Activated CD8-positive, alpha-beta T cell treated with anti-CD3 and anti-CD28 coated beads for 36 hours (primary cell): ENCODE measurements at regions of chr2 and their contacts with region 1.

Region 1: GRCh38 chr2:18520451-18521425 is 39.7 kb downstream of the RDH14 start:
- DNase-seq: peak; percentile 87
- ATAC-seq: peak; percentile 80
- H3K4me3 Mint-ChIP-seq: no peak overlapping the region
- H3K27ac Mint-ChIP-seq: no peak overlapping the region
- H3K4me1 Mint-ChIP-seq: no peaks in the 10 kb centered on the region
- H3K27me3 Mint-ChIP-seq: peaks cover 17% of the 10 kb centered on the region
- CTCF ChIP-seq: peak; percentile 78

Region 2: GRCh38 chr2:18536100-18536499 is 15.4 kb after region 1 on chr2:
- CTCF ChIA-PET with region 1: interaction called, 11 read pairs
- POLR2A ChIA-PET with region 1: no interaction called
- intact Hi-C with region 1: no loop called
- DNase-seq: no peak
- ATAC-seq: no peak
- H3K4me3 Mint-ChIP-seq: no peak overlapping the region
- H3K27ac Mint-ChIP-seq: no peak overlapping the region
- H3K4me1 Mint-ChIP-seq: peaks cover 2% of the 10 kb centered on the region
- H3K27me3 Mint-ChIP-seq: peaks cover 6% of the 10 kb centered on the region
- CTCF ChIP-seq: no peak

Region 3: GRCh38 chr2:18566145-18566769 is 45.5 kb after region 1 on chr2:
- CTCF ChIA-PET with region 1: no interaction called
- POLR2A ChIA-PET with region 1: no interaction called
- intact Hi-C with region 1: no loop called
- DNase-seq: no peak
- ATAC-seq: no peak
- H3K4me3 Mint-ChIP-seq: no peak overlapping the region
- H3K27ac Mint-ChIP-seq: no peak overlapping the region
- H3K4me1 Mint-ChIP-seq: peaks cover under 1% of the 10 kb centered on the region
- H3K27me3 Mint-ChIP-seq: no peaks in the 10 kb centered on the region
- CTCF ChIP-seq: no peak

Region 4: GRCh38 chr2:18749912-18750526 is 229.3 kb after region 1 on chr2:
- CTCF ChIA-PET with region 1: interaction called, 11 read pairs
- POLR2A ChIA-PET with region 1: no interaction called
- intact Hi-C with region 1: loop called (anchors 10 kb)
- DNase-seq: peak; percentile 67
- ATAC-seq: no peak
- H3K4me3 Mint-ChIP-seq: no peak overlapping the region
- H3K27ac Mint-ChIP-seq: no peak overlapping the region
- H3K4me1 Mint-ChIP-seq: no peaks in the 10 kb centered on the region
- H3K27me3 Mint-ChIP-seq: no peaks in the 10 kb centered on the region
- CTCF ChIP-seq: peak; percentile 82

Region 5: DNA sequence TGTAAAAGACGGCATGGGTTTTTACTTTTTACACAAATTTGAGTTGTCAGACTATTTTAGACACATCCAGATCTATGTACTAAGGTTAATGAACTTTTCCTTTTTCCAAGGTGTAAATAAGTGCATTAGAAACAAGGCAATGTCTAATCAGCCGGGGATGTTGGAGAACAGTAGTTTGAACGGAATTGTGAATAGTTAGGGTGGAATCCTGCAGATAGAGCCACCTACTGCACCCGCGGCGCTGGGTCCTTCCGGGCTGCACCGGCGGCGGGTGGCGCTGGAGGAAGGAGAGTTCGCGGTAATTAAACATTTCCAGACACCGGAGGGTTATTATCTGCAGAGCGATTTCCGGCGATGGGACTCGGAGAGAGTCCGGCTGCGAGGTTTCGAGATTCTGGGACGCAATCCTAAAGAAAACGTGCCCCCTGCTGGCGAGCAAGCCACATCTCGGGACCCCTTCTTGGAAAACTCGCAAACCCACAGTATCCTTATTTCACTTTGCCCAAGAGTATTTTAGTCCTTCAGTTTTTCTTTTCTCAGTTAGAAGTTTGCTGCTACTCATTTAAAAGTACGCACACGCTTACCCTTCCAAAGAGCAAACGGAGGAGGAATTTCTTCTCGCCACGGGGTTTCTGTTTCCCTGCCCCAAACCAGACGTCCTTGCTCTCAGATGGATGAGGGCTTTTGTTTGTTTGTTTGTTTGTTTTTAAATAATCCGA is 842.2 kb after region 1 on chr2:
- CTCF ChIA-PET with region 1: interaction called, 10 read pairs
- POLR2A ChIA-PET with region 1: no interaction called
- intact Hi-C with region 1: loop called (anchors 10 kb)
- DNase-seq: peak; percentile 71
- ATAC-seq: peak; percentile 67
- H3K4me3 Mint-ChIP-seq: peak overlapping the region; percentile 86
- H3K27ac Mint-ChIP-seq: no peak overlapping the region
- H3K4me1 Mint-ChIP-seq: peaks cover 24% of the 10 kb centered on the region
- H3K27me3 Mint-ChIP-seq: peaks cover 53% of the 10 kb centered on the region
- CTCF ChIP-seq: no peak

Region 6: DNA sequence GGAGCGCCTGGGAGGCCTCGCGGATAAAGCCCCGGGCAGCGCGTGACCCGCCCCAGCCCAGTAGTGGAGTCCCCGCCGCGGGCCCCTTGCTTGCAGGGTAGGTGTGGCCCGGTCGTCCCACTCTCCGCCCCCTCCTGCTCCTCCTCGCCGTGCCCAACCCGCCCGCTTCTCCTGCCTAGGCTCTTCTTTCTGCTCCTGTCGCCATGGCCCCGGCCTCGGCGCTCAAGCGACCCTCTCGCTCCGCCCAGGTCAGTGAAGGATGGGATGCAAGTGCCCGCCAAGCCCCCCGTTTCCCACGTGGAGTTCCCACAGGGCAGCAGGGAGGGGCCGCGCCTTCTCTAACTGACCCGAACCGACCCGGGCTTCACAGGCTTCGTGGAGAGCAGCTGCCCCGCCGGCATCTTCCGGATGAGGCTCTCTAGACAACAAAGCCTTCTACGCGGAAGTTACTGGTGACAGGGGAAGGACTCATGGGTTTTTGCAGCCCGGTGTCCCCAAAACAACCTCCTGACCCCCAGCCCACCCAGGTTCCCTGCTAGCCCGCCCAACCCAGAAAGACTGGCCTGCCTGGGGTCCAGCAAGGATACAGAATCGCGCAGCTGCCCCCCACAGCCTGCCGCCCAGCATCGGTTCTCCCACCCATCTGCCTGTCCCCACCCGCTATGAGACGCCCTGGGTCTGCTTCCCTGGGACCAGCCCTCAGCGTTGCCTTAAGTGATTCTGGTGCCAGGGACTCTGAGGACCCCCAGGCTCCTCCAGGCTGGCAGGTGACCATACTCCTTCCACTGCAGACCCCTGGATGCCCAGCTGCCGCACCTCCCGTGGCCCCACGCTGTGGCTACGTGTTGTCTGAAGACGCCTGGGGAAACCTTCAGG is 1348.2 kb after region 1 on chr2:
- CTCF ChIA-PET with region 1: interaction called, 3 read pairs
- POLR2A ChIA-PET with region 1: no interaction called
- intact Hi-C with region 1: loop called (anchors 5 kb)
- DNase-seq: peak; percentile 76
- ATAC-seq: peak; percentile 90
- H3K4me3 Mint-ChIP-seq: peak overlapping the region; percentile 89
- H3K27ac Mint-ChIP-seq: peak overlapping the region; percentile 89
- H3K4me1 Mint-ChIP-seq: peaks cover 32% of the 10 kb centered on the region
- H3K27me3 Mint-ChIP-seq: no peaks in the 10 kb centered on the region
- CTCF ChIP-seq: no peak